HEK293 (cell line): ENCODE measurements at regions of chr15 and their contacts with region 1.

Region 1: GRCh38 chr15:90320061-90320884 is 31.8 kb upstream of the ZNF774 start:
- H3K4me3 ChIP-seq: no peak overlapping the region; the same call in 1 of the 2 replicates
- H3K27ac ChIP-seq: no peak overlapping the region
- H3K4me1 ChIP-seq: peaks cover 12% of the 10 kb centered on the region; the same call in 1 of the 2 replicates
- CTCF ChIP-seq: peak; percentile 98

Region 2: GRCh38 chr15:90291679-90292356 is 28.5 kb before region 1 on chr15:
- CTCF ChIA-PET with region 1: interaction called, 23 read pairs
- POLR2A ChIA-PET with region 1: no interaction called
- H3K4me3 ChIP-seq: no peak overlapping the region
- H3K27ac ChIP-seq: no peak overlapping the region
- H3K4me1 ChIP-seq: no peaks in the 10 kb centered on the region
- CTCF ChIP-seq: no peak

Region 3: GRCh38 chr15:90336705-90337141 is 16.4 kb after region 1 on chr15:
- CTCF ChIA-PET with region 1: interaction called, 33 read pairs
- POLR2A ChIA-PET with region 1: no interaction called
- H3K4me3 ChIP-seq: no peak overlapping the region
- H3K27ac ChIP-seq: no peak overlapping the region
- H3K4me1 ChIP-seq: no peaks in the 10 kb centered on the region
- CTCF ChIP-seq: no peak

Region 4: DNA sequence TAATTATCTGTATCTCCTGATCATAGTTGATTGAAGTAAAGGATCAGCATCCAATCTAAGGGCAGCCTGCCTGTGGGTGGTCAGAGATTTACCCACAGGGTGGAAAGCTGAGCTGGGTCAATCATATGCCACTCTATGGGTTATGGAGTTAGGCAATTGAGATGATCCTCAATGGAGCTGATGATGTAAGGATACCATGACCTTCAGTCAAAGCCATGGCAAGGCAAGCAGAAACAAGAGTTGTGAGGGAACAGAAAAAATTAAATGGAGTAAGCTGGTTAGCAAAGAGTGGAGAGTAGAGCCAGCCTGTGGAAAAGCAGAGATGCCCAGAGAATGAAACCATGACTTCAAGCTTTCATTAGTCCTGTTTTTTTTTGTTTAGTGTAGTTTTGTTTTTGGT is 62.0 kb after region 1 on chr15:
- CTCF ChIA-PET with region 1: interaction called, 23 read pairs
- POLR2A ChIA-PET with region 1: no interaction called
- H3K4me3 ChIP-seq: no peak overlapping the region
- H3K27ac ChIP-seq: no peak overlapping the region
- H3K4me1 ChIP-seq: no peaks in the 10 kb centered on the region
- CTCF ChIP-seq: no peak

Region 5: DNA sequence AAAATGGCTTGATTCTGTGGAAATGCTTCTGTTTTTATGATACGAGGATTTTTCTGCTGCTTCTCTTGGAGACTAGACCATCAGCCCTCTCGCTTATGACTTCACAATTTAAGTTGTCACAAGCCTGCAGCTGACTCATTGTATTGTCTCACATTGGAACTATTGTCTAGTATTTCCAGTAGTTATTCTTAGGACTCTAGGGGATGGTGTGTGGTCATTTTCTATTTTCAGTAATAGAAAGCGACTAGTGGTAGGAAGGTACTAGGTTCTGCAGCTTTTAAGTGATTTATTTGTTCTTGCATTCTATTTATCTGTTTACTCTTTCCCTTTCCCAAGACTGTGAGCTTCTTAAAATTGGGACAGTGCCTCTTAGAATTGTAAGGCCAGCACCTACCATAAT is 143.1 kb after region 1 on chr15:
- CTCF ChIA-PET with region 1: interaction called, 24 read pairs
- POLR2A ChIA-PET with region 1: no interaction called
- H3K4me3 ChIP-seq: no peak overlapping the region
- H3K27ac ChIP-seq: no peak overlapping the region
- H3K4me1 ChIP-seq: peaks cover 15% of the 10 kb centered on the region
- CTCF ChIP-seq: no peak

Region 6: GRCh38 chr15:90497912-90498311 is 177.6 kb after region 1 on chr15:
- CTCF ChIA-PET with region 1: interaction called, 15 read pairs
- POLR2A ChIA-PET with region 1: no interaction called
- H3K4me3 ChIP-seq: no peak overlapping the region
- H3K27ac ChIP-seq: no peak overlapping the region
- H3K4me1 ChIP-seq: no peaks in the 10 kb centered on the region
- CTCF ChIP-seq: no peak

Region 7: DNA sequence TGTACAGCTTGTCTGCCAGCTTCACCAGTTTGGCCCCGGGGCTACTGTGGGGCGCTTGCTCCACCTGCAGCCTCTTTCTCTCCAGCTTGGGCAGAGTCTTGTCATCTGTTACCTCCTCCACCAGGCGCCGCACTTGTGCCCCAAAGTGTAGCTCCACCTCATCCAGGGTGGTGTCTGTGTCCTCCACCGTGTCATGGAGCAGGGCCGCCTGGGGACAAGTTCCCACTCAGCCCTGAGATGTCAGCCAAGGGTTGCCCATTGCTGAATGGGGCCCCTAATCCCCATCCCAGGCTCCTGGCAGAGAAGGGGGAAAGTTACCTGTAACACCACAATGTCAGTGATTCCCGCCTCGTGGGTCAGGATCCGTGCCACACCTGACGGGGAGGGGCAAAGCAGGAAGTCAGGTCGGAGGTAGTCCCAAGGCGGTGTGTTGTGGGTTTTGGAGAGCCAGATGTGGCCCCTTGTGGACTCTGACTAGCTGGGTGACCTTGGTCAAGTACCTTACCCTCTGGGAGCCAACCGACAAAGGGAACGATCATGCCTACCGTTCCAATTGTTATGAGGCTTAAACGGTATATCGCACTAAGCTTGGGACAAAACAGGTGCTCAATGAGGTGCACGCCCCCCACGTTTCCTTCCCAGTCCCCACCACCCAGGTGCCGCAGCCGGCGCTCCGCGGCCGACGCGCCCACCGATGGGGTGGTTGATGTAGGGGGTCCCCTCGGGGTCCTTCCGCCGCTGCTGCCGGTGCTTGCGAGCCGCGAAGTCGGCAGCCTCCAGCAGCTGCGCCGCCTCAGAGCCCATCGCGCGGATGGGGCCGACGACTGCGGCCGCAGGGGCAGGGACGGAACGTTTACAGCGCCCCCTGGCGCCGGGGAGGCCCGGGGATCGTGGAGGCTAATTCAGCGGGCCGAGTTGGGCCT is 611.7 kb after region 1 on chr15 and contains the start of gene HDDC3:
- CTCF ChIA-PET with region 1: interaction called, 18 read pairs
- POLR2A ChIA-PET with region 1: no interaction called
- H3K4me3 ChIP-seq: peak within 1 kb of the TSS; percentile 87
- H3K27ac ChIP-seq: peak within 1 kb of the TSS; percentile 93
- H3K4me1 ChIP-seq: 0 out of 2 replicates have a peak, but pooled peaks cover 2% of the 10 kb centered on the region
- CTCF ChIP-seq: peak; percentile 96